Breast epithelium (tissue), 4 donors: ENCODE measurements at regions of chr18 and their contacts with region 1.

Region 1: DNA sequence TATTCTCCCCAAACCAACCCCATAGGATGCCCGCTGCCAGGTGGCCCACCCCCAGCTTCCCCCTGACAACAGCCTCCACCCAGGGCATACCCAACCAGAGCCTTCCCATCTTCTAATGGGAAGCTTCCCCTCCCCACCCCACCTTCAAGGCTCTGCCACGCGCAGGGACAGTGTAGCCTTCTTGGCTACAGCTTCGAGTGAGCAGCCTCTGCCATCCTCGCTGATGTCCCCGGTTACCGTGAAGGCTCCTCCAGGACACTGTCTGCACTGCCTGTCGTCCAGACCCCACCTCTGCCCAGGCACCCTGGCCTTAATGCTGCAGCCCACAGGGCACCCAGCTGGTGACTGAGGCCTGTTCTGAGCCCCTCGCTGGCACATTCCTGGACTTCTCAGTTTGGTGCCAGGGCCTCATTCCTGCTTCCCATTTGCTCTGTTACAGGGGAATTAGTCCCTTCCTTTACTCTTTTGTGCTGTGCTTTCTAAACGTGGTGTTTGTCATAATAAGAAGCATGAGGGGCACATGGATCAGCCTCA is 13.0 kb upstream of the ADNP2 start:
- DNase-seq: no peak
- H3K4me3 ChIP-seq: no peak overlapping the region
- H3K27ac ChIP-seq: no peak overlapping the region
- H3K4me1 ChIP-seq: no peaks in the 10 kb centered on the region
- H3K27me3 ChIP-seq: no peaks in the 10 kb centered on the region
- CTCF ChIP-seq: no peak
- POLR2A ChIP-seq: no peak

Region 2: DNA sequence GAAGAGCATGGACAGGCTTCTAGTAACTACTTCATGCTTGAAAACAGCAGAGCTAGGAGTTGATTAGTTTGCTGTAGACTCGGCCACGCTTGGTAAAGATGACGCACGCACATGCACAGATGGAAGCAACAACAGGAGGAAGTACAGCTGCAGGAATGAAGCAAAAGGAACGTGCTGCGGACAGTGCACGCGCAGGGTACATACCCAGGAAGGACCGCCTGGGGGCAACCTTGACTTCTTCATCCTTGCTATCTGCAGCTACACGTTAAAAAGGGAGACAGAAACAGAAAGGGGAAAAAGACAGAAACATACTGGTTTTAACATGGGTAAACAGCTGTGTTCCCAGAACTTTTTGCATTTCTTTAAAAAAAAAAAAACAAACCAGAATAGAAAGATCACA is 162.3 kb before region 1 on chr18:
- intact Hi-C with region 1: no loop called
- DNase-seq: peak in 1 of 2 donors; percentile 50
- H3K4me3 ChIP-seq: no peak overlapping the region
- H3K27ac ChIP-seq: no peak overlapping the region
- H3K4me1 ChIP-seq: no peaks in the 10 kb centered on the region
- H3K27me3 ChIP-seq: no peaks in the 10 kb centered on the region
- CTCF ChIP-seq: no peak
- POLR2A ChIP-seq: no peak

Region 3: GRCh38 chr18:80046961-80047541 is 49.0 kb before region 1 on chr18:
- intact Hi-C with region 1: loop called (anchors 10 kb)
- DNase-seq: no peak
- H3K4me3 ChIP-seq: no peak overlapping the region
- H3K27ac ChIP-seq: no peak overlapping the region
- H3K4me1 ChIP-seq: no peaks in the 10 kb centered on the region
- H3K27me3 ChIP-seq: no peaks in the 10 kb centered on the region
- CTCF ChIP-seq: no peak
- POLR2A ChIP-seq: no peak

Region 4: GRCh38 chr18:80112624-80113248 is 16.6 kb after region 1 on chr18:
- intact Hi-C with region 1: no loop called
- DNase-seq: no peak
- H3K4me3 ChIP-seq: no peak overlapping the region
- H3K27ac ChIP-seq: no peak overlapping the region
- H3K4me1 ChIP-seq: peaks cover 4% of the 10 kb centered on the region in 2 donors
- H3K27me3 ChIP-seq: no peaks in the 10 kb centered on the region
- CTCF ChIP-seq: no peak
- POLR2A ChIP-seq: no peak